ENCODE measurements at regions of chr16 and their contacts with region 1.

Region 1: GRCh38 chr16:14501331-14502255 is 128.5 kb downstream of the PARN start:
- DNase-seq: peak; percentile 67
- ATAC-seq: peak; percentile 85
- H3K4me3 ChIP-seq: peak overlapping the region in 1 of 2 experiments; percentile 4; a peak in 1 of 4 replicates
- H3K27ac ChIP-seq: peak overlapping the region; percentile 54
- H3K4me1 ChIP-seq: peaks cover 55 to 61% of the 10 kb centered on the region in 2 experiments
- H3K27me3 ChIP-seq: no peaks in the 10 kb centered on the region
- CTCF ChIP-seq: no peak
- POLR2A ChIP-seq: no peak
- RAD21 ChIP-seq: peak; percentile 5; the same call in 1 of the 2 replicates

Region 2: GRCh38 chr16:13945744-13946505 is 555.7 kb before region 1 on chr16:
- CTCF ChIA-PET with region 1: no interaction called
- POLR2A ChIA-PET with region 1: no interaction called
- RAD21 ChIA-PET with region 1: no interaction called
- intact Hi-C with region 1: no loop called
- DNase-seq: no peak
- ATAC-seq: no peak
- H3K4me3 ChIP-seq: no peak overlapping the region
- H3K27ac ChIP-seq: no peak overlapping the region
- H3K4me1 ChIP-seq: no peaks in the 10 kb centered on the region
- H3K27me3 ChIP-seq: no peaks in the 10 kb centered on the region
- CTCF ChIP-seq: no peak
- POLR2A ChIP-seq: no peak
- RAD21 ChIP-seq: no peak

Region 3: GRCh38 chr16:14347706-14348105 is 153.9 kb before region 1 on chr16:
- CTCF ChIA-PET with region 1: no interaction called
- POLR2A ChIA-PET with region 1: no interaction called
- RAD21 ChIA-PET with region 1: no interaction called
- intact Hi-C with region 1: no loop called
- DNase-seq: no peak
- ATAC-seq: no peak
- H3K4me3 ChIP-seq: no peak overlapping the region
- H3K27ac ChIP-seq: no peak overlapping the region
- H3K4me1 ChIP-seq: peaks cover 0 to 5% of the 10 kb centered on the region in 2 experiments; a peak in 1 of 4 replicates
- H3K27me3 ChIP-seq: no peaks in the 10 kb centered on the region
- CTCF ChIP-seq: no peak
- POLR2A ChIP-seq: no peak
- RAD21 ChIP-seq: no peak

Region 4: DNA sequence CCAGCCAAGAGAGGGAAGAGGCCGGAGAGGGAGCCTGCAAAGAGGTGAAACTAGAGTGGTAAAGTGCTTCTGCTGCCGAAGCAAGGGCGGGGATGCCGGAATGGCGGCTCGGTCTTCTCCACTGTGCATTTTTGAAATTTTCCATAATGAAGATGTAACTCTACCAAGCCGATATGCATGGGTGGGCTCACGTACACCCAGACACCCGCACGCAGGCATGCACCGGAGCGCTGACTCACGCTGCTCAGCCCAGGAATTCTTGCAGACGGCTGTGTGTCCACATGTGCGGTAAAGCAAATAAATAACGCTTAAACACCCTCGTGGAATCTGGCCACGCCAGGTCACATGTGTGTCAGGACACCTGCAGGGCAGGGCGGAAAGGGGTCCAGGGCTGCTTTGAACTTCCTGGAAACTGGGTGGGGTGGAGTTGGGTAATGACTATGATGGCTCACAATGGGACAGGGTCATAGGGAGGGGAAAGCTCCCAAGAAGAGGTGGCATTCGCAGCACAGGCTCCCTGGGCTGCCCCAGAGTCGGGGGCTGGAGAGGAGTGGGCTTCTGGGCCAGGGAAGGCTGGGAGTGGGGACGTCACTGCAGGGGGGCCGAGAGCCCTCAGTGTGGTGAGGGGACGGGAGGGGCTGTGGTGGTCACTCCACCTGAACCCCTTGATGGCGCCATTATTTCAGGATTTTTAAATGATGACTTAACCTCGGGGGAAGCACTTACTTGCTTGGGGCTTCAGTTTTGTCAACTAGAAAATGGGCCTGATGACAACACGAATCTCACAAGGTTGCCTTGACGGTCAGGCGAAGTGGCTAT is 137.0 kb before region 1 on chr16:
- CTCF ChIA-PET with region 1: no interaction called
- POLR2A ChIA-PET with region 1: no interaction called
- RAD21 ChIA-PET with region 1: no interaction called
- intact Hi-C with region 1: no loop called
- DNase-seq: peak; percentile 46
- ATAC-seq: peak; percentile 71
- H3K4me3 ChIP-seq: peak overlapping the region; percentile 35 to 52
- H3K27ac ChIP-seq: peak overlapping the region; percentile 63
- H3K4me1 ChIP-seq: peaks cover 20 to 26% of the 10 kb centered on the region in 2 experiments
- H3K27me3 ChIP-seq: no peaks in the 10 kb centered on the region
- CTCF ChIP-seq: no peak
- POLR2A ChIP-seq: no peak
- RAD21 ChIP-seq: peak; percentile 61

Region 5: DNA sequence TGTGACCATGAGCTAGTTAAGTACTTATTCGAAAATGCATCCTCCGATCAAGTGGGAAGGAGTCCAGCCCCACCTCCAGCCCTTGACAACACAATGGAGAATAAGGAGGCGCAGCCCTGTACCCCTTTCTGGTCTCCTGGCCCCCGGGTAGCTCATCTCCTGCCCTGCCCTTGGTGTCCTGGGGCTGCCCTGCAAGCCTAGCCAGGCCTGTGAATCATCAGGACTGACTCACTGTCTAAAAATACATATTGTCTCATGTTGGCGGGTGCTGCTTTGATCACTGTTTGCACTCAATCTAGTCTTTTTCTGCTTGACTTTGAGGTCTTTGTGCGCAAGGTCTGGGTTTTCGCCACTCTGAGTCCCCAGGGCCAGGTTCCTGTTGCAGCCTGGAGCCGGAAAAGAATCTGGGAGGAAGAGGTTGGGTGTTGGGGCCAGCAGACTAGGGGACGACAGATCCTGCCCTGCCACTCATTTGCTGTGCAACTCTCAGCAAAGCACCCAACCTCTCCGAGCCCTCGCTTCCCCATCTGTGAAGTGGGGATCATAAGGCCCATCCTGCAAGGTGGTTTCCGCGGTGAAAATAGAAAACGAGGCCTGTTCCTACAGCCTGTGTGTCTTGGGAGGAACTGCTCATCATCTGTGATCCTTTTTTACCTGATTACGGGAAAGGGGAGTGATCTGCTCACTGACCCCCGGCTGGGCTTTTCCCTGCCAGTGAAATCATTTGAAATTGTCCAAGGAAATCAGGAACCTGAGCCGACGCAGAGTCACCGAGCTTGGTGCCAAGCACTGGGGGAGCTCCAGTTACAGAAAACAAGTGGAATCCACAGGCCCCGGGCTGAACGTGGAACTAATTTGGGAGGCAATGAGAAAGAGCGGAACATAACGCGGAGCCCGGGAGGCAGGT is 102.0 kb before region 1 on chr16:
- CTCF ChIA-PET with region 1: no interaction called
- POLR2A ChIA-PET with region 1: no interaction called
- RAD21 ChIA-PET with region 1: no interaction called
- intact Hi-C with region 1: loop called (anchors 5 kb)
- DNase-seq: peak; percentile 48
- ATAC-seq: peak; percentile 88
- H3K4me3 ChIP-seq: peak overlapping the region in 1 of 2 experiments; percentile 31; a peak in 2 of 4 replicates
- H3K27ac ChIP-seq: peak overlapping the region; percentile 91
- H3K4me1 ChIP-seq: peaks cover 48 to 72% of the 10 kb centered on the region in 2 experiments
- H3K27me3 ChIP-seq: no peaks in the 10 kb centered on the region
- CTCF ChIP-seq: no peak
- POLR2A ChIP-seq: no peak
- RAD21 ChIP-seq: peak; percentile 8; the same call in 1 of the 2 replicates

Measured in HCT116 (cell line).